MCF 10A (cell line): ENCODE measurements at regions of chr12 and their contacts with region 1.

Region 1: DNA sequence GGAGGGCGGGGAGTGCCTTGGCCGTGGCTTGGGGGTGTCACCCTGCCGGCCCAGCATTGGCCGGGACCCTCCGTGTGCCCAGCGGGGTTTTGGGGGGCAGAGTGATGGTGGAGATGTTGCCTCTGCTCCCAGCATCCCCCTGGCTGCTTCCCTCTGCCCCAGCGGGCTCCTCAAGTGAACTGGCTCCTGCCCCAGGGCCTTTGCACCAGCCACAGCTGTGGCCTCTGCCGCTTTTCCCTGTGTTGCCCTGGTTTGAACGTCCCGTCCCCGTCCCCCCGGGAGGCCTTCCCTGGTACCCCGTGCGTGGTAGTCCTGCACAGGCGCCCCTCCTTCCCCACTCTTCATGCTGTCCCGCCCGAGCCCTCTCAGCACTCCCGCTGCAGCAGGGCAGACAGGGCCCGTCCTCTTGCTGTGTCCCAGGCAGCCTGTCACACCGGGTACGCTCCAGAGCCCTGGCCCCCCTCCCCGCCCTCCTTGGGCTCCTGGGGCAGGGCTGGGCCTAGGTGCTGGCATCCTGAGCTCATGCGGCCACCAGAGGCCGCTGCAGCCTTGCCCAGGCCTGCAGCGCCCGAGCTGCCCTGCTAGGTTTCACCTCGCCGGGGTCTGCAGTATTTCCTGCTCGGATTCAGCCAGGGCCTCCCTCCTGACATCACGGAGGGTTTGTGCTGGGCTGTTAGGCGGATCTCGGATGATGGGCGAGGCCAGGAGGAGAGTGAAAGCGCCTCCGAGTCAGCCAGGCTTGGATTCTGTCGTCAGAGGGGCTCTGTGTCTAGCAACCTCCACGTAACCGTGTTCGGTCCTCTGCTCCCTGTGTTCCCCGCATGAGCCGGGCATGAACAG is 9.5 kb downstream of the NOC4L start:
- DNase-seq: peak; percentile 71
- H3K4me3 Mint-ChIP-seq: no peak overlapping the region
- H3K27ac Mint-ChIP-seq: no peak overlapping the region
- H3K4me1 Mint-ChIP-seq: no peaks in the 10 kb centered on the region
- H3K27me3 Mint-ChIP-seq: no peaks in the 10 kb centered on the region
- CTCF ChIP-seq: peak; percentile 87

Region 2: GRCh38 chr12:131608740-131609690 is 544.7 kb before region 1 on chr12:
- CTCF ChIA-PET with region 1: no interaction called
- POLR2A ChIA-PET with region 1: no interaction called
- intact Hi-C with region 1: no loop called
- DNase-seq: peak; percentile 66
- H3K4me3 Mint-ChIP-seq: no peak overlapping the region
- H3K27ac Mint-ChIP-seq: no peak overlapping the region
- H3K4me1 Mint-ChIP-seq: peaks cover 4% of the 10 kb centered on the region
- H3K27me3 Mint-ChIP-seq: peaks cover 22% of the 10 kb centered on the region
- CTCF ChIP-seq: peak; percentile 78

Region 3: GRCh38 chr12:132218915-132219314 is 65.2 kb after region 1 on chr12:
- CTCF ChIA-PET with region 1: interaction called, 6 read pairs
- POLR2A ChIA-PET with region 1: no interaction called
- intact Hi-C with region 1: loop called (anchors 2 kb)
- DNase-seq: peak; percentile 35
- H3K4me3 Mint-ChIP-seq: no peak overlapping the region
- H3K27ac Mint-ChIP-seq: no peak overlapping the region
- H3K4me1 Mint-ChIP-seq: no peaks in the 10 kb centered on the region
- H3K27me3 Mint-ChIP-seq: peaks cover 58% of the 10 kb centered on the region
- CTCF ChIP-seq: no peak